A673 (cell line): ENCODE measurements at regions of chr12 and their contacts with region 1.

Region 1: GRCh38 chr12:80472902-80473500 is 29.0 kb downstream of the PTPRQ start:
- DNase-seq: peak; percentile 84
- H3K4me3 ChIP-seq: no peak overlapping the region
- H3K27ac ChIP-seq: no peak overlapping the region
- H3K4me1 ChIP-seq: peaks cover 27% of the 10 kb centered on the region
- H3K27me3 ChIP-seq: no peaks in the 10 kb centered on the region
- CTCF ChIP-seq: peak; percentile 75

Region 2: DNA sequence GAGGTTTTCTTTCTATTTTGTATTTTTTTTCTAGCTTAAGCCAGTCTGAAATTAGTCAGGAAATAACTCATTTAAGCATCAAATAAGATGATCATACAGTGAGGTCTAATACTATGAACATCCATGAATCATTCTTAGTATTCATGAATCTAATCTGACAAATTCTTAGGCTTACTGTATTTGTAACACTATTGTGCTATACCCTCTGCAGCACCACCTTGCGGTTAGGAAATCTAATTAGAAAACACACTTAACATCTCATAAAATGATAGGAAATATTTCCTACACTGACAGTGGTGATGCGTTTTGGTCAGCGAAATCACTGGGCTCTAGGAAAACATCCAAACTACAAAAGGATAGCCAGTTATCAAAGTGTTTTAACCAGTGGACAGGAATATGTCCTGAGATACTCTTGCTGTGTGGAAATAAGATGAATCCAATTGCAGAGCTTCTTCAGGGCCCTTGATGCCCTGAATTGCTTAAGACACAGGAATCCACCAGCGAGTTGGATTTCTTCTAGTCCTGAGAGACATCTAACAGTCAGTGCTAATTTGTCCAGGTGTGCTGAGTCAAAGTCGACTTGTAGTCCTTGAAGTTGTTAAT is 125.1 kb after region 1 on chr12:
- CTCF ChIA-PET with region 1: interaction called, 6 read pairs
- POLR2A ChIA-PET with region 1: no interaction called
- intact Hi-C with region 1: loop called (anchors 2 kb)
- DNase-seq: peak; percentile 78
- H3K4me3 ChIP-seq: no peak overlapping the region
- H3K27ac ChIP-seq: peak overlapping the region; percentile 69
- H3K4me1 ChIP-seq: peaks cover 81% of the 10 kb centered on the region
- H3K27me3 ChIP-seq: no peaks in the 10 kb centered on the region
- CTCF ChIP-seq: peak; percentile 72

Region 3: DNA sequence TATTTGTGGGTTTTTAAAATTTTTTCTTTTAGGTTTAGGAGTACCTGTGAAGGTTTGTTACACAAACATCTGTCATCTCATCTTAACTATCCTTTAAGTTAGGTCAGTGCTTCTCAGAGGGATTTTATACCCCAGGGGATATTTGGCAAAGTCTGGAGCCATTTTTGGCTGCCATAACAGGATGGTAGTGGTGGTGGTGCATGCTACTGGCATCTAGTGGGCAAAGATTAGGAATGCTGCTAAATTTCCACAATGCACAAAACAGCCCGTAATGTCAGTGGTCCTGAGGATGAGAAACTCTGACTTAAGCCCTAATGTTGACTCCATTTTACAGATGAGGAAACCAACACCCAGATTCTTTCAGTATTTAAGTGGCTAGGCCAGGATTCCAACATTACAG is 149.3 kb after region 1 on chr12:
- CTCF ChIA-PET with region 1: no interaction called
- POLR2A ChIA-PET with region 1: no interaction called
- intact Hi-C with region 1: loop called (anchors 2 kb)
- DNase-seq: peak; percentile 83
- H3K4me3 ChIP-seq: no peak overlapping the region
- H3K27ac ChIP-seq: no peak overlapping the region
- H3K4me1 ChIP-seq: peaks cover 3% of the 10 kb centered on the region
- H3K27me3 ChIP-seq: no peaks in the 10 kb centered on the region
- CTCF ChIP-seq: peak; percentile 66

Region 4: DNA sequence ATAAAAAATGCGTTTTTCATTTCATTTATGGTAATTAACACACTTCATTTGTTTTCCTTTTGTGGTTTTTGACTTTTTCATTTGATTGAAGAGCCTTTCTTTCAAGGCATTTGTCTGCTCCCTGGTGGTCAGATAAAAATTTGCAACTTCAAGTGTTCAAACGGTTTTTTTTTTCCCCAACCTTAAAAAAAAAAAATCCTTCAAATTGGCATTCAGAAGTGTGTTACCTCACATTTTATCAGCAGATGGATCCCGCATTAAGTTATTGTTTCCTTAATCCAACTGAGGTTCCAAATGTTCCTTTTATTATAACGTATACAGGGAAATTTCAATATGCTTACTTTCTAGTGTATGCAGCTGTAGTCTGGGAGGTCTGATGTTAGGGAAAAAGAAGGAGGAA is 290.9 kb after region 1 on chr12:
- CTCF ChIA-PET with region 1: interaction called, 3 read pairs
- POLR2A ChIA-PET with region 1: no interaction called
- intact Hi-C with region 1: loop called (anchors 2 kb)
- DNase-seq: peak; percentile 74
- H3K4me3 ChIP-seq: no peak overlapping the region
- H3K27ac ChIP-seq: no peak overlapping the region
- H3K4me1 ChIP-seq: peaks cover 7% of the 10 kb centered on the region
- H3K27me3 ChIP-seq: no peaks in the 10 kb centered on the region
- CTCF ChIP-seq: peak; percentile 77

Region 5: DNA sequence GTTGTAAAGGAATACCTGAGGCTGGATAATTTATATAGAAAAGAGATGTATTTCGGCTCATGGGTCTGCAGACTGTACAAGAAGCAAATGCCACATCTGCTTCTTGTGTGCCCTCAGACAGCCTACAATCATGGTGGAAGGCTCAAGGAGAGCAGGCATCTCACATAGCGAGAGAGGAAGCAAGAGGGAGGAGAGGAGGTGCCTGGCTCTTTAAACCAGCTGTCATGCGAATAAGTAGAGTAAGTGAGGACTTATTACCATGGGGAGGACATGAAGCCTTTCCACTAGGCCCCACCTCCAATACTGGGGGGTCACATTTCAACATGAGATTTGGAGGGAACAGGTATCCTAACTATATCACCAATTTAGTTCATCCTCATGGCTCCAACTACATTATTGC is 723.6 kb after region 1 on chr12:
- CTCF ChIA-PET with region 1: no interaction called
- POLR2A ChIA-PET with region 1: no interaction called
- intact Hi-C with region 1: no loop called
- DNase-seq: no peak
- H3K4me3 ChIP-seq: no peak overlapping the region
- H3K27ac ChIP-seq: no peak overlapping the region
- H3K4me1 ChIP-seq: no peaks in the 10 kb centered on the region
- H3K27me3 ChIP-seq: no peaks in the 10 kb centered on the region
- CTCF ChIP-seq: no peak